ENCODE measurements at regions of chr2 and their contacts with region 1.

Region 1: GRCh38 chr2:101883863-101884262 is 107.9 kb upstream of the IL1R2 start:
- H3K4me3 Mint-ChIP-seq: no peak overlapping the region
- H3K27ac Mint-ChIP-seq: peak overlapping the region; percentile 63
- H3K4me1 Mint-ChIP-seq: peaks cover 26% of the 10 kb centered on the region
- H3K27me3 Mint-ChIP-seq: no peaks in the 10 kb centered on the region

Region 2: GRCh38 chr2:101188683-101189405 is 695.0 kb before region 1 on chr2:
- intact Hi-C with region 1: no loop called
- H3K4me3 Mint-ChIP-seq: no peak overlapping the region
- H3K27ac Mint-ChIP-seq: peak overlapping the region; percentile 45
- H3K4me1 Mint-ChIP-seq: peaks cover 23% of the 10 kb centered on the region
- H3K27me3 Mint-ChIP-seq: peaks cover 2% of the 10 kb centered on the region

Region 3: GRCh38 chr2:101983928-101984327 is 100.1 kb after region 1 on chr2:
- intact Hi-C with region 1: loop called (anchors 2 kb)
- H3K4me3 Mint-ChIP-seq: no peak overlapping the region
- H3K27ac Mint-ChIP-seq: no peak overlapping the region
- H3K4me1 Mint-ChIP-seq: peaks cover 47% of the 10 kb centered on the region
- H3K27me3 Mint-ChIP-seq: no peaks in the 10 kb centered on the region

Region 4: DNA sequence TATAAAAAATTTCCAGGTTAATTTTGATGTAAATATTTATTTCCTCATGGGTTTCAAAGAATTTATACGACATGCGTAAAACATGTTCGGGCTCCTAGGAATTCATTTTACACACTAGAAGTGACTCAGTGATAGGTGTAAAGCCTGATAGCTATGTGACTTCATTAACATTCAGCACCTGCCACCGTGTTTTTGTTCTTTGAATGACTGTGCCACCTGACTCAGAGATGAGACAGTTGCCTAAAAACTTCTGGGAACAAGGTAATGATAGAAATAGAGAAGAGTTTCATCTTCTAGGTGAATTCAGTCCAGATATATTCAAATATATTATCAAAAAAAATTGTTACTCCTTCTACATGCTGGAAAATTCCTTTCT is 117.9 kb after region 1 on chr2:
- intact Hi-C with region 1: loop called (anchors 5 kb)
- H3K4me3 Mint-ChIP-seq: no peak overlapping the region
- H3K27ac Mint-ChIP-seq: no peak overlapping the region
- H3K4me1 Mint-ChIP-seq: peaks cover 57% of the 10 kb centered on the region
- H3K27me3 Mint-ChIP-seq: no peaks in the 10 kb centered on the region

Region 5: DNA sequence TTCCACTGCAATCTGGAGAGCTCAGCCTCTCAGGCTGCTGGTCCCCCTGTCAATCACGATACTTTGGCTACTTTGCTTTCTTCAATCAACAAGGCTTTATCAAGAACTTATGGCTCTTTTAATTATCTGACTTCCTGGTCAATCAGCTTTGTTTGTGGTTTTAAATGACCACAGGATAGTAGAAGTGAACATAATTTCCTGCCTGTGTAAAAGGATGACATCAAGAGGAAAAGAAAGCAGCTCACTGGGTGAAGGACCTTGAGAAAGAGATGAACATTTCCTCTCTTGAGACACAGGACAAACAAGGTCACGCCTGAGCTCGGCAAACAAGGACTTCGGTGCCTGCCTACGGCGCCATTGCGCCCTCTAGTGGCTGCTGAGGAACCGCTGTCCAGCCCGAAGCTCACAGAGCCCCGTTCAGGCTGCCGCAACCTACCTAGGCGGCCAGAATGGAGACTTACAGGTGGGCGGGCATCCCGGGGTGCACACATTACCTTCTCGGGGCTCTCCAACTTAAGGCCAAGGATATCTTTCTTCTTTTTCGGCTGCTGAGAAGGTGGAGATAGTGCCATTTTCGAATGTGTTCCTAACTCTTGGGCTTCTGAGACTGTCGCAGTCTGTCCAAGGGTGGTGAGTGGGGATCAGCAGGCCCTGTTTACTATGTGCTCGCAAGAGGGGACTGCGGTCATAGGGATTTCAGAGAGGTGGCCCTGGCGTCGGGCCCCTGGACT is 356.9 kb after region 1 on chr2:
- intact Hi-C with region 1: loop called (anchors 2 kb)
- H3K4me3 Mint-ChIP-seq: no peak overlapping the region
- H3K27ac Mint-ChIP-seq: peak overlapping the region; percentile 68
- H3K4me1 Mint-ChIP-seq: peaks cover 32% of the 10 kb centered on the region
- H3K27me3 Mint-ChIP-seq: peaks cover 23% of the 10 kb centered on the region

Region 6: DNA sequence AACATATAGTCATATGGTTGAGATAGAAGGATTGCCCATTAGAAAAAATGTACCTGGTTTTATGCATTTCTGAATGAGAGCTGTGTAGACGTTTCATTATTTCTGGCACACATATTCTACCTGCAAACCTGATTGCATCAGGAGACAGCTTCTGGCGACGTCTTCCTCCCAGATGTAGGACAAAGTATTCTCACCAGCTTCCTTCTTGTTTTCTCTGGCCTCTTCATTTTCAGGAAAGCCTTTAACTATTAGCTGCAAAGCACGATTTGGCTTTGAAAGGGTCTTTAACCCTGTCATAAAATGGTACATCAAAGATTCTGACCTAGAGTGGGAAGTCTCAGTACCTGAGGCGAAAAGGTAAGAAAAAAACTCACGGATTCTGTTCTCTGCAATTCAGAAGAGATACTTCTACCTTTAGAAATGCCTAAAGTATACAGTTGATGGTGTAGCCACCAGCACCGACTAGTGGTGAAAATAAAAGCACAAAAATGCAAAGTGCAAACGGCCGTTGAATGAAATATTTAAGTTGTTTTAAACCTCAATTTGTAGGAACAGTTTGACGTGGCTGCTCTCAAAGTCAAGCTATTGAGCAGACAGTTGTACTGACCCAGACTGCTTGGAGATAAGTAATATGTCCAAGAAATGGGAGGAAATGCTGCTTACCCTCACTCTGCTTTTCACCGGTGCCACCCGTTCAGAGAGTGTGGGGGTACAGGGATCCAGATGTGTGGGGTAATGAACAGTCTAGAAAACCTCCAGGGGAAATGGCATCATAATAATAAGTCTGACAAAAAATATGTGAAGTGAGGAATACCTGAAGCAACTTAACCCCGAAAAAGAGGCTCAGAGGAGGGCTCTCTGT is 559.3 kb after region 1 on chr2:
- intact Hi-C with region 1: loop called (anchors 10 kb)
- H3K4me3 Mint-ChIP-seq: no peak overlapping the region
- H3K27ac Mint-ChIP-seq: no peak overlapping the region
- H3K4me1 Mint-ChIP-seq: no peaks in the 10 kb centered on the region
- H3K27me3 Mint-ChIP-seq: peaks cover 6% of the 10 kb centered on the region

Measured in dendritic cell treated with granulocyte-macrophage colony-stimulating factor and Interleukin-4, amounts not matched to agents 40 ng/mL and 50 ng/mL, for 4 days (primary cell).